ENCODE measurements at regions of chr7 and their contacts with region 1.

Region 1: DNA sequence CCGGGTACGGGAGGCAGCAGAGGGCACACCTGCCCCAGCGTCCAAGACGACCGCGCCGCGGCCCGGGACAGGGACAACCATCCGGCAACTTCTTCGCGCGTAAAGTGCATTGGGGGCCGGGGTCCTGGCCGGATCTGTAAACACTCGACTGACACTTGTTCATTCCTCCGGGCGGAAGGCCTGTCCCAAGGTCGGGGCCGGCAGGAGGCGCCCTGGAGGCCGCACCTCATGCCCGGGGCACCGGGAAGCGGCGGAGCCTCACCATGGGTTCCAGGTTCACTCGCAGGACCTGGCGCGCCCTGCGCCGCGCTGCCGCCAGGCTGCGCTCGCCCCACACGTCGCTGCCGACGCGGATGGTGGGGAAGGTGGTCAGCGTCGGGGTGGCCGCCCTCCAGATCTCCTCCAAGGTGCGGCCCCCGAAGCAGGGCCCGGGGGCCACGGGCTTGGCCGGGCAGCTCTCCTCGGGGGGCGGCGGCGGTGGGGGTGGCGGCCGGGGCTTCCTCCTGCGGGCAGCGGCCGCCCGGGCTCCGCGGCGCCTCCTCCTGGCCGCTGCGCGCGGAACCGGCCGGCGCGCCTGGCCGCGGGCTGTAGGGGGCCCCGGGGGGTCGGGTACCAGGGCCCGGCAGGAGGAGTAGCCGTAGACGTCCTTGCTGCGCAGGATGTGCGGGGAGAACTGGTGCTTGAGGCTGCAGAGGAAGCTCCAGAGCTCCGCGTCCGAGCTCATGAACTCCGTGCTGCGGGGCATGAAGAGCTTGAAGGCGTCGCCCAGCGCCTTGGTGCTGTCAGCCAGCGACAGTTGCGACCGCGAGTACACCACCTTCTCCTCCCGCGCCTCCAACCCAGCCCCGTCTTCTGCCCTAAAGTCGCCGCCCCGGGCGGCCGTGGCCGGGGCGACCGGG is 746 bp downstream of the CCDC71L start:
- DNase-seq: peak; percentile 87
- ATAC-seq: peak; percentile 71

Region 2: GRCh38 chr7:106604303-106604923 is 55.8 kb before region 1 on chr7:
- intact Hi-C with region 1: loop called (anchors 5 kb)
- DNase-seq: no peak
- ATAC-seq: no peak

Region 3: DNA sequence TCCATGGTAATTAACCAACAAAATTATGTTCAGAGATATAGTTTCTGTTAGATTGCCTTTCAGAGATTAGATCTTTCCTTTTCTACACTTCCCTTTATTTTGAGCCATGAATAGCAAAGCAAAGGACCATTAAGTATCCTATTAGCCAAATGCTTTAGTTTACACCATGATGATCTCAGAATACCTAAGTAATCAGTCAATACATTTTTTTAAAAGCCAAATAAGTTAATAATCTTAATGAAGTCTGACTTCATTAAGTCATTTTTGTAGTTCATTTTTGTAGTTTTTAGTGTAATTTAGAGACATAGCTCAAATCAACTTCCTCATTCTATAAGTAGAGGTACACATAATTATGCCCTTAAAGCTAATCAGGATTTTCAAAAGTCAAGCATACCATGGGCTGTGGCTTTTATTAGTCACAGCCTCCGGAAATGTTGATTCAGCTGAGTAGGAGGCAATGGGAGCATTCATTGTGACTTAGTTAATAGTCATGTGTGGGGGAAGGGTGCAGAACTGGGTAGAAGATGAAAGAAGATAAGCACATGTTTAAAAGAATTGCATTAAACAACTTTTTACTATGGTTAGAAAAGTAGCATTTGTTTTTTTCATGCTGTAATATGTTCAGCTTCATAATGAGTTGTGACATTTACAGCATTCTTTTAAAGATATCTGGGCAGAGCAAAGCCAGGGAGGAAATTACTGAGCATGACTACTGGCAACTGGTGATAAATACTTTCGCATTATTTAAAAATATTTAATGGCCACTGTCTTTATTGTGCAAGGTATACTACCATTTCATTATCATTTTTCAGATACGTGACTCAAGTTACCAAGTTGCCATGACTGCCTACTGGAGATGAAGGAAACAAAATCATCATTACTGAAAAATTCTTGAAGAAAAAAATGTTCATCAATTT is 58.0 kb after region 1 on chr7:
- intact Hi-C with region 1: no loop called
- DNase-seq: no peak
- ATAC-seq: peak; percentile 34

Region 4: DNA sequence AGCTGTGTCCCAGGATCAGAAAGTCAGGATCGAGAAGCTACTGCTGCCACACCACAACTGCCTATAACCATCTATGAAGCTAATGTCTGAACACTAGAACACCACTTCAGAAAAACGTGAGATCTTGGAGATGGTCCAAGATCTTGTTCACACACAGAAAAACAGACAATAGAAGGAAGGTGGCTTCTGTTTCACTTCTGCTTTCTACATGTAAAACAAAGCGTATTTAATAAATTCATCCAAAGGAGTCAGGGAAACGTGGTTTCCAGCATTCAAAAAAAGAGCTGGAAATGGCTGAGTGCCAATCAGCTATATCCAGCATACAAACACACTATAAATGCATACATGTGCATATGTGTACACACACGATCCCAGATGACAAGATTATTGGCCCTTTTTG is 71.0 kb after region 1 on chr7:
- intact Hi-C with region 1: loop called (anchors 5 kb)
- DNase-seq: no peak
- ATAC-seq: peak; percentile 43